ENCODE measurements at regions of chr7 and their contacts with region 1.

Region 1: DNA sequence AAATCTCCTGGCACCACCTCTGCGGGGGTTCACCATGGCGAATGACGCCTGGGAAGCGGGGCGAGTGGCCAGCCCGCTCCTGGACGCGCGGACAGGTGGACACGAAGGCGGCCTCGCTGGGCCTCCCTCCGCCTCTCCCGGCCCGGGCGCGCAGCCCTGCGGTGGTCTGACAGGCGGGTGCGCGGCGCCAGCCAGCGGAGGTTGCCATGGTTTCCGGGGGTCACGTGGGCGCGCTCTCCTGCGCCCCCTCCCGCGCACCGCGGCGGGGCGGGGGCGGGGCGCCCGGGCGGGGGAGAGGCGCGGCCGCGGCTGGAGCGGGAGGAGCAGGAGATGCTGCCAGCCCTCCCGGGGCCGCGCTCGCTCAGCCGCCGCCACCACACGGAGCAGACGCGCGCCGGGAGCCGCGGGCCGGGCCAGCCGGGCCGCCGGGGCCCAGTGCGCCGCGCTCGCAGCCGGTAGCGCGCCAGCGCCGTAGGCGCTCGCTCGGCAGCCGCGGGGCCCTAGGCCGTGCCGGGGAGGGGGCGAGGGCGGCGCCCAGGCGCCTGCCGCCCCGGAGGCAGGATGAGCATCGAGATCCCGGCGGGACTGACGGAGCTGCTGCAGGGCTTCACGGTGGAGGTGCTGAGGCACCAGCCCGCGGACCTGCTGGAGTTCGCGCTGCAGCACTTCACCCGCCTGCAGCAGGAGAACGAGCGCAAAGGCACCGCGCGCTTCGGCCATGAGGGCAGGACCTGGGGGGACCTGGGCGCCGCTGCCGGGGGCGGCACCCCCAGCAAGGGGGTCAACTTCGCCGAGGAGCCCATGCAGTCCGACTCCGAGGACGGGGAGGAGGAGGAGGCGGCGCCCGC is at the start of gene PRKAR2B:
- DNase-seq: peak; percentile 25
- ATAC-seq: peak; percentile 84
- H3K4me3 ChIP-seq: peak within 1 kb of the TSS; percentile 67
- H3K27ac ChIP-seq: no peak within 1 kb of the TSS
- H3K4me1 ChIP-seq: peaks cover 15% of the 10 kb centered on the region
- H3K27me3 ChIP-seq: peaks cover 47% of the 10 kb centered on the region
- CTCF ChIP-seq: no peak
- total RNA-seq, gene PRKAR2B: 0.29 and 1.5 TPM in 2 replicates

Region 2: GRCh38 chr7:106793015-106793975 is 251.3 kb before region 1 on chr7:
- CTCF ChIA-PET with region 1: no interaction called
- POLR2A ChIA-PET with region 1: no interaction called
- intact Hi-C with region 1: loop called (anchors 10 kb)
- DNase-seq: peak; percentile 55
- ATAC-seq: peak; percentile 42; the same call in 1 of the 2 replicates
- H3K4me3 ChIP-seq: no peak overlapping the region
- H3K27ac ChIP-seq: no peak overlapping the region
- H3K4me1 ChIP-seq: peaks cover 3% of the 10 kb centered on the region; the same call in 1 of the 2 replicates
- H3K27me3 ChIP-seq: no peaks in the 10 kb centered on the region
- CTCF ChIP-seq: peak; percentile 79

Region 3: DNA sequence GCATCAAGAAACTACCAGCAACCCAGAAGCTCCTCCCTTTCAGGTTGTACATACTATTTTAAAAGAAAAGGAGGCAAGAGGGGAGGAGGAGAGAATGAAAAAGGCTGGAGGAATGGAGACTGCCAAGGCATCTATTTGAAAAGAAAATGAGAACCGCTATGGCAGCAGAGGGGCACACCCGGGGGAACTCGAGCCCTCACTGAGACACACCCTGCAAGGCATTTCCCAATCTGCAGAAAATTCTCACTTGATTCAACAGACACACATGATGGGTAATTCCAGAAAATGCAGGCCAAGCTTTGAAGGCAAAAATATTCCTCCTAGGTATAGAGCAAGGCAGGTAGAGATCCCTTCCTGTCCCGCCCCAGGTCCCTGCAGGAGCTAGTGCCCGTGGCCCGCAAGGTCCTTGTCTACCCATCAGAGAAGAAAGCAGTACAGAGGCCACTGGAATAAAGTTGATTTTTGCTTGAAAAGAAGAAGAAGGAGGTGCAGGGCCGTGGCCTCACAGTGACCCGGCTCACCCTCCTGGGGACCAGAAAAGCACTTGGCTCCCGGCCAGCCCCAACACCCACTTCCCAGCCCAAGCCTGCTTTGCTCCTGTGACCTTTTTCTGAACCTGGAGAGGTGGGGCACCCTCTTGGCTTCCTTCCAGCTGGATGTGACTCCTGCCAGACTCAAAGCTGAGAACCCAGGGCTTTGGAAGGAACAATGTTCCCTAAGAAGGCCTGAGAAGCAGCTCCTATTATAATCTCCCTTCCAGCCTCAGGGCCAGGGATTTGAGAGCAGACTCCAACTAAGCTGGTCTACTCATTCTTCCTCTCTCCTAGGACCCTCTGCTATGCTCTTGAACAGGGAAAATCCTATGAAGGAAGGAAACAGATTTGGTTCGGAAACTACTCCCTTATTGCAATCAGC is 185.7 kb before region 1 on chr7:
- CTCF ChIA-PET with region 1: no interaction called
- POLR2A ChIA-PET with region 1: no interaction called
- intact Hi-C with region 1: no loop called
- DNase-seq: no peak
- ATAC-seq: no peak
- H3K4me3 ChIP-seq: no peak overlapping the region
- H3K27ac ChIP-seq: no peak overlapping the region
- H3K4me1 ChIP-seq: no peaks in the 10 kb centered on the region
- H3K27me3 ChIP-seq: peaks cover 17% of the 10 kb centered on the region; the same call in 1 of the 2 replicates
- CTCF ChIP-seq: no peak

Region 4: DNA sequence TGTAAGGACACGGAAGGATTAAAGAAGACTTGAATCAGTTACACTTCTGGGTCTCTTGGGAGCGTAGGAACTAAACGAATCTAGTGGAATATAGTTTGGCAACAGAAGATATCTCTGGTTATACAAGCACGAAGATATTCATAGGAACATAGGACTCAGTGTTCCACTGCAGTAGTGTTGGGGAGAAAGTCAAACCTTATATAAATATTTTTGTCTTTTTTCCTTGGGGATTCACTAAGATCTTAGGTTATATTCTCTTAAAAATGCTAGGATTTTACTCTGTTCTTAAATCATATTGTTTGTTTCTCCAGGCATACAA is 21.3 kb after region 1 on chr7:
- CTCF ChIA-PET with region 1: no interaction called
- POLR2A ChIA-PET with region 1: no interaction called
- intact Hi-C with region 1: no loop called
- DNase-seq: no peak
- ATAC-seq: no peak
- H3K4me3 ChIP-seq: no peak overlapping the region
- H3K27ac ChIP-seq: no peak overlapping the region
- H3K4me1 ChIP-seq: no peaks in the 10 kb centered on the region
- H3K27me3 ChIP-seq: peaks cover 59% of the 10 kb centered on the region
- CTCF ChIP-seq: no peak

Region 5: DNA sequence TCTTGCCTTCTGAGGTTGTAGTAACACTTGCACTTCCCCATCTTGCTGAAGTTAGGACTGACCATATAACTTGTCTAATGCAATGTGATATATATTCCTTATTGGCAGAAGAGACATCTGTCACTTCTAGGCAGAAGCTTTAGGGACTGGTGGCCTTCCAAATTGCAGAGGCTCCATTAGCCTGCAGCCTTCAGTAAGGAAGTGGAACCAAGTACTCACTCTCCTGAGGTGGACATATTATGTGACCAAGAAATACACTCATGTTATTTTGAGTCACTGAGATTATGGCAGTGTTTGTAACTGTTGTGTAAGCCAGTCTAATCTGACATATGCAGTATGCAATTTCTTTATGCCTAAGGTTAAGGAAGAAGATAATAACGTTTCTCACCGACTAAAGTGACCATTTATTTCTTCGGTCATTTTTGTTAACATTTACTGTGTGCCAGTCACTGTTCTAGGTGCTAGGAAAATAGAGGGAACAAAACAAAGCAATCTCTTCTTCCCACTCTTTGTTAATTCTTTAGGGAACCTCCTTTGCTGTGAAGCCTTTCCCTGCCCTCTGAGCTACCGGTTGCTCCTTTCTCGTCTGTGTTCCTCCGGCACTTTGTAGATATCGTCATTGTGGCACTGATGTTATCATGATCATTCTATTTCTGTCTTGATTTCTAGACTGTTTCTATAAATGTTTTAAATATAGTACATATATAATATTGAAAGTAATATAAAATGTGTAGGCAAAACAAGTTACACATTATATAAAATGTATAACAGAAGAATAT is 71.4 kb after region 1 on chr7:
- CTCF ChIA-PET with region 1: interaction called, 14 read pairs
- POLR2A ChIA-PET with region 1: no interaction called
- intact Hi-C with region 1: no loop called
- DNase-seq: no peak
- ATAC-seq: no peak
- H3K4me3 ChIP-seq: no peak overlapping the region
- H3K27ac ChIP-seq: no peak overlapping the region
- H3K4me1 ChIP-seq: no peaks in the 10 kb centered on the region
- H3K27me3 ChIP-seq: 0 out of 2 replicates have a peak, but pooled peaks cover 13% of the 10 kb centered on the region
- CTCF ChIP-seq: no peak

Region 6: DNA sequence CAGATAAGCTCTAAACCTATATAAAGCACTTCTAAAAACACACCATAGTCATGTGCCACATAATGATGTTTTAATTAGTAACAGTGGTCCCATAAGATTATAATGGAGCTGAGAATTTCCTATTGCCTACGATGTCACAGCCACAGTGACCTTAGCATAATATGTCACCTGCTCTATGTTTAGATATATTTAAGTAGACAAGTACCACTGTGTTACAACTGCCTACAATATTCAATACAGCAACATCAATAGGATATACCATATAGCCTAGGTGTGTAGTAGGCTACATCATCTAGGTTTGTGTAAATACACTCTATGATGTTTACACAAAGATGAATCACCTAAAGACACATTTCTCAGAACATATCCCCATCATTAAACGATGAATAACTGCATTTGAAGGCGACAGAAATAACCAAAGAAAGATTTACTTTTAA is 449.8 kb after region 1 on chr7:
- CTCF ChIA-PET with region 1: no interaction called
- POLR2A ChIA-PET with region 1: no interaction called
- intact Hi-C with region 1: no loop called
- DNase-seq: peak; percentile 69
- ATAC-seq: peak; percentile 100
- H3K4me3 ChIP-seq: no peak overlapping the region
- H3K27ac ChIP-seq: peak overlapping the region; percentile 72
- H3K4me1 ChIP-seq: peaks cover 16% of the 10 kb centered on the region
- H3K27me3 ChIP-seq: no peaks in the 10 kb centered on the region
- CTCF ChIP-seq: no peak

Region 7: GRCh38 chr7:108079648-108080591 is 1035.3 kb after region 1 on chr7:
- CTCF ChIA-PET with region 1: no interaction called
- POLR2A ChIA-PET with region 1: no interaction called
- intact Hi-C with region 1: no loop called
- DNase-seq: peak; percentile 70
- ATAC-seq: peak; percentile 96
- H3K4me3 ChIP-seq: 0 out of 2 replicates have a peak overlapping the region, but pooled peaks have one; percentile 13
- H3K27ac ChIP-seq: peak overlapping the region; percentile 38
- H3K4me1 ChIP-seq: peaks cover 29% of the 10 kb centered on the region
- H3K27me3 ChIP-seq: no peaks in the 10 kb centered on the region
- CTCF ChIP-seq: no peak